SK-N-SH (cell line): ENCODE measurements at regions of chr12 and their contacts with region 1.

Region 1: DNA sequence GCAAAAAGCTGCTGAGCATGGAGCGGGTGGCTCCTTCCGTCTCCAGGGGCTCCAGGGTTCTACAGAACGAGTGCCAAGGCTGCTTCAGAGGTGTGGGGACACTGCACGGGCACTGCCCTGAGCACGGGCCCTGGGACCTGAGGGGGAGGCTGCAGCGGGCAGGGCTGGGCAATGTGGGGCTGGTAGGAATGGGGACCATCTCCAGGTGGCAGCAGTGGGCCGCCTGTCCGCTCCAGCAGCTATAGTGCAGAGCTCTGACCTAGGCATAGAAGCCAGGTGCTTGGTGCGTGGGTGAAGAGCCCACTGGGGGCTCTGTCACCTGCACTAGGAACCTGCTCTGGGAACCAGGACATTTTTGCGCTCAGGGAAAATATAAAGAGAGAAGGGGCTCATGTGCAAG is 22.3 kb downstream of the HDAC7 start:
- DNase-seq: peak; percentile 76
- H3K4me3 ChIP-seq: no peak overlapping the region
- H3K27ac ChIP-seq: no peak overlapping the region
- H3K4me1 ChIP-seq: peaks cover 6 to 21% of the 10 kb centered on the region in 2 experiments; a peak in 2 of 4 replicates
- H3K27me3 ChIP-seq: no peaks in the 10 kb centered on the region
- CTCF ChIP-seq: peak; percentile 41
- EP300 ChIP-seq: no peak
- RAD21 ChIP-seq: peak; percentile 67

Region 2: DNA sequence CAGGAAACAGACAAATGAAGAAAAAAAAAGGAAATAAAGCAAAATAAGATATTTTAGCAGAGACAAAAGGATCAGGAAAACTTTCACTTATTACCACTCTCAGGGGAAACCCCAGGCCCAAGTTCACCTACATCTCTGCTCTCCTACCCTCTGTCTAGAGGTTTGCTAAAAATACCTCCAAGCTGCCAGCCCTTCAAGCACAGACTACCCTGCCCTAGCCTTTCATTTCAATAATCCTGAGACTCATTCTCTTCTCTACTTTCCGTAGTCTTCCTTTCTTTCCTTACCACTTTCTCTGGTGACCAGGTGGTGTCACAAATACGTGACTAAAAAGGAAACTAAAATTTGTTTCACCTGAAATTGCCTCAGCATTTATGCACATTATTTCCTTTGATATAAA is 125.4 kb before region 1 on chr12:
- CTCF ChIA-PET with region 1: no interaction called
- POLR2A ChIA-PET with region 1: no interaction called
- DNase-seq: no peak
- H3K4me3 ChIP-seq: no peak overlapping the region
- H3K27ac ChIP-seq: no peak overlapping the region
- H3K4me1 ChIP-seq: peaks cover 0 to 3% of the 10 kb centered on the region in 2 experiments; a peak in 2 of 4 replicates
- H3K27me3 ChIP-seq: no peaks in the 10 kb centered on the region
- CTCF ChIP-seq: no peak
- EP300 ChIP-seq: no peak
- RAD21 ChIP-seq: no peak

Region 3: DNA sequence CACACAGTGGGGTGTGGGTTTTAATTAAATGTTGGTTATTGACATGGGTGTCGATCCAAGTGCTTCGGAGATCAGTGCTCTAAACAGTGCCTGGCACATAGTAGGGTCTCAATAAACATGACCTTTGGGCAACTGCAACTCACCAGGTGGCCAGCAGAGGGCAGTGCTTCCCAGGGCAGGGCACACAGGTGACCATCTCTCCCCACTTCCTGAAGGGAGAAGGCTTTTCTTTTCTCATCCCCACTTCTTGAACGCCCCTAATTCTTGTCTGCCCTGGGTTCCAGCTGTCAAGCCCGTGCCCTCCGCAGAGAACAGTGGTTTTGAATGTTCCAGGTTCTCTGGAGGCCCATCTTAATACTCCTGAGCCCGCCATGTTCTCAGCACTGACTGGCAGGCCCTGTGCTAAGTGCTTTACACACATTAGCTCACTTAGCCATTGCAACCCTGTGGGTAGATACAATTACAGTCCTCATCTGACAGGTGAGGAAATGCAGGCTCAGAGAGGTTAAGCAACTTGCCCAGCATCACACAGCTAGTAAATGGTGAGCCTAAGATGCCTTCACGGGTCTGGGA is 55.1 kb before region 1 on chr12:
- CTCF ChIA-PET with region 1: interaction called, 35 read pairs
- POLR2A ChIA-PET with region 1: no interaction called
- DNase-seq: peak; percentile 72
- H3K4me3 ChIP-seq: no peak overlapping the region
- H3K27ac ChIP-seq: no peak overlapping the region
- H3K4me1 ChIP-seq: peaks cover 14 to 39% of the 10 kb centered on the region in 2 experiments; a peak in 3 of 4 replicates
- H3K27me3 ChIP-seq: no peaks in the 10 kb centered on the region
- CTCF ChIP-seq: peak; percentile 98
- EP300 ChIP-seq: no peak
- RAD21 ChIP-seq: peak; percentile 82

Region 4: GRCh38 chr12:47779301-47779942 is 18.0 kb before region 1 on chr12:
- CTCF ChIA-PET with region 1: interaction called, 32 read pairs
- POLR2A ChIA-PET with region 1: no interaction called
- DNase-seq: peak; percentile 88
- H3K4me3 ChIP-seq: peak overlapping the region in 1 of 2 experiments; percentile 31; a peak in 1 of 4 replicates
- H3K27ac ChIP-seq: no peak overlapping the region
- H3K4me1 ChIP-seq: peaks cover 15 to 44% of the 10 kb centered on the region in 2 experiments; a peak in 3 of 4 replicates
- H3K27me3 ChIP-seq: no peaks in the 10 kb centered on the region
- CTCF ChIP-seq: peak; percentile 92
- EP300 ChIP-seq: no peak
- RAD21 ChIP-seq: peak; percentile 98

Region 5: DNA sequence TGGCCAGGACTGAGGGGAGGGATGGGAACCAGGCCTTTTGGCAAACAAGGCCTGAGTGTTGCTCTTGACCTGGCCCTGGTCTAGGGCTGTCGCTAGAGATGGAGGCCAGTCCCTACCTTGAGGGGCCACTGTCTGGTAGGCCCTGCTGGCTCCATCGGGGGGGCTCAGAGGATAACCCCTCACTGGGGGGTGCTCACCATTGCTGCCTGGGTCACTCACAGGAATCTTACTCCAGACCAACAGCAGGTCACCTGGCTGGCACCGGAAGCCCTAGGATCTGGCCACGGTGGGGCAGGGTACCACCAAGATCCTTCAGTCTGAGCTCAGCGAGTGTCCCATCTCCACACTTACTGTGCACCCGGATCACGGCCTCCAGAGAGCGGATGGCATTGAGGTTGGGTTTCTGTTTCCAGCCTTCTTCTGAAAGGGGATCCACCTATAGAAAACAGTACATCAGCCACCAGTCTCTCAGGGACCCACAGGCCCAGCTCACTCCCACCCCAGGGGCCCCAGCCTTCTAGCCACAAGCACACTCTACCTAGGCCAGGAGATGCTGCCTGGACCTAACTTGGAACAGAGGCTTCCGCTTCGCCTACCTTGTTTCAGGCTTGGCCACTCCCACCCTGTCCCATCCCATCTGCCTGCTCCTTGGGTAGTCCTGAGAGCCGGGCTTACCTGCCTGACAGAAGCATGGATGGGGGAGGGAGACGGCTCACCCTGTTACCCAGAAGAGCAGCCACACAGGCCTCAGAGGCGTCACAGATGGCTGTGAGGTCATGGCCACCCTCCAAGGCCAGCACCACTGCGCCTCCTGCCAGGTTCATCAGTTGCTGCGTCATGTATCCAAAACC is 12.2 kb before region 1 on chr12:
- CTCF ChIA-PET with region 1: interaction called, 32 read pairs
- POLR2A ChIA-PET with region 1: no interaction called
- DNase-seq: no peak
- H3K4me3 ChIP-seq: no peak overlapping the region
- H3K27ac ChIP-seq: no peak overlapping the region
- H3K4me1 ChIP-seq: peaks cover 0 to 5% of the 10 kb centered on the region in 2 experiments; a peak in 1 of 4 replicates
- H3K27me3 ChIP-seq: no peaks in the 10 kb centered on the region
- CTCF ChIP-seq: no peak
- EP300 ChIP-seq: no peak
- RAD21 ChIP-seq: no peak

Region 6: GRCh38 chr12:47812797-47813510 is 15.5 kb after region 1 on chr12:
- CTCF ChIA-PET with region 1: interaction called, 11 read pairs
- POLR2A ChIA-PET with region 1: interaction called, 3 read pairs
- DNase-seq: no peak
- H3K4me3 ChIP-seq: peak overlapping the region in 1 of 2 experiments; percentile 36; a peak in 1 of 4 replicates
- H3K27ac ChIP-seq: peak overlapping the region; percentile 48 to 84
- H3K4me1 ChIP-seq: peaks cover 67 to 76% of the 10 kb centered on the region in 2 experiments
- H3K27me3 ChIP-seq: no peaks in the 10 kb centered on the region
- CTCF ChIP-seq: no peak
- EP300 ChIP-seq: 0 out of 4 replicates have a peak, but pooled peaks of 1 of the 2 experiments have one; percentile 36
- RAD21 ChIP-seq: no peak

Region 7: GRCh38 chr12:47828608-47829536 is 31.4 kb after region 1 on chr12:
- CTCF ChIA-PET with region 1: interaction called, 25 read pairs
- POLR2A ChIA-PET with region 1: no interaction called
- DNase-seq: peak; percentile 83
- H3K4me3 ChIP-seq: no peak overlapping the region
- H3K27ac ChIP-seq: peak overlapping the region in 1 of 2 experiments; percentile 81; a peak in 2 of 4 replicates
- H3K4me1 ChIP-seq: peaks cover 14% of the 10 kb centered on the region in 2 experiments; a peak in 2 of 4 replicates
- H3K27me3 ChIP-seq: no peaks in the 10 kb centered on the region
- CTCF ChIP-seq: no peak
- EP300 ChIP-seq: no peak
- RAD21 ChIP-seq: no peak

Region 8: GRCh38 chr12:48040354-48040753 is 242.9 kb after region 1 on chr12:
- CTCF ChIA-PET with region 1: no interaction called
- POLR2A ChIA-PET with region 1: no interaction called
- DNase-seq: no peak
- H3K4me3 ChIP-seq: no peak overlapping the region
- H3K27ac ChIP-seq: no peak overlapping the region
- H3K4me1 ChIP-seq: no peaks in the 10 kb centered on the region
- H3K27me3 ChIP-seq: no peaks in the 10 kb centered on the region
- CTCF ChIP-seq: no peak
- EP300 ChIP-seq: no peak
- RAD21 ChIP-seq: no peak